Mammary epithelial cell (primary cell): ENCODE measurements at regions of chr7 and their contacts with region 1.

Region 1: DNA sequence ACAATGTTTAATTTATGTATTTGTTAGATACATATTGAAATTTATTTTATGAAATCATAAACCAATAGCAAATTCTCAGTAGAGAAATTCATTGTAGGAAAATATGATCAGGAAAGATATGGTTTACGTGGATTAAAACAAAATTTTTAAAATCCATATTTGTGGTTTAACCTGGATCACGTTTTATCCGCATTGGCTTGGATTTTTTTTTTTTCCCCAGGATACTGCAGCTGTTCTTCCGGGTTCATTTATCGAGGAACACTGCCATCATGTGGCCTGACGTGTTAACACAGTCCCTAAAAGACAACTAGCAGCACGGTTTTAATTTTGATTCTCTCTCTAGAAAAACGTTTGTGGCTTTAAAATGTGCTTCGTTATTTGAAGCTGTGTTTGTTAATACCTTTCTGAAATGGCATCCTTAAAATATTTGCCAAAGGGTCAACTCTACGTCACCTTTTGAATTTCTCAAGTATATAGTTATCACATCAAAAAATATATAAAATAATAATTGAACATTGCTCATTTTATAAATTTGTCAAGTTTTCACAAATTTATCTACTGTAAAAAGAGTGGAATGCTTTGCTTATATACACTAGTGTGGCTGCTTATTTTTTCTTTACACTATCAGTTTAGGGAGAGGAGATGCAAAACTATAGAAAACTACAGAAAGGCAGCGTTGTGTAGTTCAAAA is 8.7 kb upstream of the ASB4 start:
- DNase-seq: peak; percentile 37
- H3K4me3 ChIP-seq: no peak overlapping the region
- H3K27ac ChIP-seq: no peak overlapping the region
- H3K4me1 ChIP-seq: no peaks in the 10 kb centered on the region
- H3K27me3 ChIP-seq: no peaks in the 10 kb centered on the region
- CTCF ChIP-seq: peak; percentile 75 to 82

Region 2: GRCh38 chr7:94449148-94449725 is 1027.8 kb before region 1 on chr7:
- CTCF ChIA-PET with region 1: interaction called, 3 read pairs
- dilution Hi-C with region 1: no loop called
- in situ Hi-C with region 1: no loop called
- intact Hi-C with region 1: loop called (anchors 2 kb)
- DNase-seq: peak; percentile 24
- H3K4me3 ChIP-seq: no peak overlapping the region
- H3K27ac ChIP-seq: no peak overlapping the region
- H3K4me1 ChIP-seq: no peaks in the 10 kb centered on the region
- H3K27me3 ChIP-seq: peaks cover 3% of the 10 kb centered on the region
- CTCF ChIP-seq: peak; percentile 45 to 65

Region 3: GRCh38 chr7:94632338-94633013 is 844.6 kb before region 1 on chr7:
- CTCF ChIA-PET with region 1: no interaction called
- dilution Hi-C with region 1: no loop called
- in situ Hi-C with region 1: no loop called
- intact Hi-C with region 1: no loop called
- DNase-seq: peak; percentile 93
- H3K4me3 ChIP-seq: peak overlapping the region in 2 of 3 experiments; percentile 12 to 27
- H3K27ac ChIP-seq: peak overlapping the region; percentile 93
- H3K4me1 ChIP-seq: peaks cover 33% of the 10 kb centered on the region
- H3K27me3 ChIP-seq: no peaks in the 10 kb centered on the region
- CTCF ChIP-seq: no peak

Region 4: DNA sequence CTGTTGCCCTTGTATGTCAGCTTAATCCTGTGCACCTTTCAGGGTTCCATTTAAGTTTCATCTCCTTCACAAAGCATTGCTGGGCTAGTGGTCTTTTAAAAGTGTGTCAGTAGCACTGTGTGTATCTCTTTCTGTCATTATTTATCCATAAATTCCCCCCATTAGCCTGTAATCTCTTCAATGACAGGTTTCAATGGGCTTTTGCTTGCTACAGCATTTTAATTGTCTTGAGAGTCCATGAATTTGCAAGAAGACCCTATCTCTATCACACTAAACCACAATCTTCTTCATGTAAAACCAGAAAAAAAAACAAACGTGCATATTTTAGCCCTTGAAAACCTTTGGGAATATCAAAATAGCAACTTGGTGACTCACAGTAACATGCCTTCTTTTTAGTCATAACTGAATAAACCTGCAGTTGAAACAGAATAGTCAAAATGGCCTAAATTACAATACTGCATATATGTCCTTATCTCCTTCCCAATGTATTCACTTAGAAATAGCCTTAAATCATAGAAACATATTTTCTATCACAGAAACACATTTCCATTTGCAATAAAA is 271.3 kb before region 1 on chr7:
- CTCF ChIA-PET with region 1: no interaction called
- dilution Hi-C with region 1: no loop called
- in situ Hi-C with region 1: no loop called
- intact Hi-C with region 1: loop called (anchors 5 kb)
- DNase-seq: peak; percentile 17
- H3K4me3 ChIP-seq: no peak overlapping the region
- H3K27ac ChIP-seq: no peak overlapping the region
- H3K4me1 ChIP-seq: peaks cover 7% of the 10 kb centered on the region
- H3K27me3 ChIP-seq: peaks cover 8% of the 10 kb centered on the region
- CTCF ChIP-seq: no peak

Region 5: DNA sequence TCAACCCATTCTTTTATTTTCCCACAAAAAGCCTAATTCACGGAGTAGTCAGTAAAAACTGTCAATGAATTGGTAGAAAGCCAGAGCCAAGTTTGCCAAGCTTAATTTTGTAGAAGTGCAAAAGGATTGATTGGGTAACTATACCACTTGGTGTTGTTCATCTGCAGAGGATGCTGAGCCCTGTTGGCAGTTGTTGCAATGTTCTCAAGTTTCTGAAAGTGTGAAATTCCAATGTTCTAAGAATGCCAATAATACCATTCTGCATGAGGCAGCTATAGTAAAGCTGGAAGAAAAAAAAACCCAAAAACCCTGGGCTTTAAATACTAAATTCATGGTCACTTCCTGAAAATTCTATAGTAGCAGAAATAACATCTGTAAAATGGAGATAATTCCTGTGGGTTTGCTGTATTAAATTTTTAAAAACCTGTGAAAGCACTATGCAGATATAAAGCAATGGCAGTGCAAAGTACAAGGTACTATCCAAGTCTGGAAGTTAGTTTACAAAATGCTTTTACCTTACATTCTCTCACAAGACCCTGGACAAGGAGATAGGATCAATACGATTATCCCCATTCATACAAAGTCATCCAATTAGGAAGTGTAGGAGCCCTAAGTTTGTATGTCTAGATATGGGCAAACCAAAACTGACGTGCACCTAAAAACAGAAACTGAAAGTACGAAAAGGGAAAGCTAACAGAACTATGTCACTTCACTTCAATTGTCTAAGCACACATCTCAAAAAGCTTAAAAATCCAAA is 146.7 kb before region 1 on chr7:
- CTCF ChIA-PET with region 1: no interaction called
- dilution Hi-C with region 1: no loop called
- in situ Hi-C with region 1: no loop called
- intact Hi-C with region 1: loop called (anchors 10 kb)
- DNase-seq: no peak
- H3K4me3 ChIP-seq: peak overlapping the region in 2 of 3 experiments; percentile 48 to 58
- H3K27ac ChIP-seq: no peak overlapping the region
- H3K4me1 ChIP-seq: peaks cover 17% of the 10 kb centered on the region
- H3K27me3 ChIP-seq: no peaks in the 10 kb centered on the region
- CTCF ChIP-seq: no peak

Region 6: DNA sequence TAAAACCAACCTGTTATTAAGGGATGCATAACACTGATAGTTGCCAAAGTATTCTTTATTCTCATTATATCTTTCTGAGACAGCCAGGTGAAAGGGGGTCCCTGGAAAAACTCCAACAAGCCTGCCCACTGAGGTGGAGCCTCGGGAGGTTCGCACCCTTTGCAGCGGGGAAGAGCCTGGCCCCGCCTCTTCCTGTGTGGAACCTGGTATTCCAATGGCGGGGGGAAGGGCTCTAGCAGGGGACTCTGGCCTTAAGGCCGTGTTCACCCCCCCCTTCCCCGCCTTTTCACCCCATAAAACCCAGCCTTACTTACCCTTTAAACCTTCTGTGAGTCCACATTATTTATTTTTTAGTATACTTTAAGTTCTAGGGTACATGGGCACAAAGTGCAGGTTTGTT is 181.6 kb after region 1 on chr7:
- CTCF ChIA-PET with region 1: no interaction called
- dilution Hi-C with region 1: no loop called
- in situ Hi-C with region 1: no loop called
- intact Hi-C with region 1: no loop called
- DNase-seq: no peak
- H3K4me3 ChIP-seq: no peak overlapping the region
- H3K27ac ChIP-seq: no peak overlapping the region
- H3K4me1 ChIP-seq: no peaks in the 10 kb centered on the region
- H3K27me3 ChIP-seq: peaks cover 2% of the 10 kb centered on the region
- CTCF ChIP-seq: no peak

Region 7: GRCh38 chr7:96075510-96076349 is 598.7 kb after region 1 on chr7:
- CTCF ChIA-PET with region 1: no interaction called
- dilution Hi-C with region 1: no loop called
- in situ Hi-C with region 1: no loop called
- intact Hi-C with region 1: no loop called
- DNase-seq: peak; percentile 26
- H3K4me3 ChIP-seq: peak overlapping the region; percentile 50 to 74 (median 61)
- H3K27ac ChIP-seq: no peak overlapping the region
- H3K4me1 ChIP-seq: peaks cover 12% of the 10 kb centered on the region
- H3K27me3 ChIP-seq: no peaks in the 10 kb centered on the region
- CTCF ChIP-seq: peak; percentile 79 to 91